ENCODE measurements at regions of chr1 and their contacts with region 1.

Region 1: DNA sequence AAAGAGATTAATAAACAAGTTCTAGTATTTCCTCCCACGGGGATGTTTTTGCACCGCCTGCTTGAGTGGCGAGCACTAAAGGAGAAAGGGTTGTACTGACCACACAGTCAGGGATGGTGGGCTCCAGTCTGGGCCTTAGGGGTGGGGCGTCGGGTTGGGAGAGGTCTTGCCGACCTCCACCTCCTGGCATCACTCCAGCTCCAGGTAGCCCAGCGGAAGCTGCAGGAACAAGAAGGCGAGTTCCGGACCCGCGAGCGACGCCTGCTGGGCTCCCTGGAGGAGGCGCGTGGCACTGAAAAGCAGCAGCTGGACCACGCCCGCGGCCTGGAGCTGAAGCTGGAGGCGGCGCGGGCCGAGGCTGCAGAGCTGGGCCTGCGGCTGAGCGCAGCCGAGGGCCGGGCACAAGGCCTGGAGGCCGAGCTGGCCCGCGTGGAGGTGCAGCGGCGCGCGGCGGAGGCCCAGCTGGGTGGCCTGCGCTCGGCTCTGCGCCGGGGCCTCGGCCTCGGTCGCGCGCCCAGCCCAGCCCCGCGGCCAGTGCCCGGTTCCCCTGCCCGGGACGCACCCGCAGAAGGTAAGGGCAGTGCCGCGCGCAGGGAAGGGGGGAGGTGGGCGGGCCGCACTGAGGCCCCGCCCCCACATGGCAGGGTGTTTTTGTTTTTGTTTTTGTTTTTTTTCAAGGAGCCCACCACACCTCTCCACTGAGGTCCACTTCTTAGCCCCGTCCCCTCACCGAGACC is 19.7 kb downstream of the MFAP2 start:
- DNase-seq: peak; percentile 90 to 91
- H3K4me3 ChIP-seq: peak overlapping the region; percentile 26
- H3K4me3 Mint-ChIP-seq: peak overlapping the region; percentile 59
- H3K27ac Mint-ChIP-seq: no peak overlapping the region
- H3K4me1 ChIP-seq: no peaks in the 10 kb centered on the region
- H3K4me1 Mint-ChIP-seq: no peaks in the 10 kb centered on the region
- H3K27me3 ChIP-seq: no peaks in the 10 kb centered on the region
- H3K27me3 Mint-ChIP-seq: no peaks in the 10 kb centered on the region
- CTCF ChIP-seq: peak; percentile 46 to 75

Region 2: GRCh38 chr1:16913833-16914662 is 46.7 kb before region 1 on chr1:
- CTCF ChIA-PET with region 1: no interaction called
- POLR2A ChIA-PET with region 1: no interaction called
- intact Hi-C with region 1: loop called (anchors 5 kb)
- DNase-seq: peak; percentile 91 to 95
- H3K4me3 ChIP-seq: peak overlapping the region; percentile 82
- H3K4me3 Mint-ChIP-seq: peak overlapping the region; percentile 85
- H3K27ac Mint-ChIP-seq: peak overlapping the region; percentile 71
- H3K4me1 ChIP-seq: peaks cover 4% of the 10 kb centered on the region; the same call in 1 of the 2 replicates
- H3K4me1 Mint-ChIP-seq: peaks cover 16% of the 10 kb centered on the region
- H3K27me3 ChIP-seq: no peaks in the 10 kb centered on the region
- H3K27me3 Mint-ChIP-seq: no peaks in the 10 kb centered on the region
- CTCF ChIP-seq: peak in 1 of 2 experiments; percentile 13

Region 3: GRCh38 chr1:16946646-16947045 is 14.1 kb before region 1 on chr1:
- CTCF ChIA-PET with region 1: interaction called, 26 read pairs
- POLR2A ChIA-PET with region 1: interaction called, 3 read pairs
- intact Hi-C with region 1: loop called (anchors 1 kb)
- DNase-seq: no peak
- H3K4me3 ChIP-seq: no peak overlapping the region
- H3K4me3 Mint-ChIP-seq: no peak overlapping the region
- H3K27ac Mint-ChIP-seq: no peak overlapping the region
- H3K4me1 ChIP-seq: no peaks in the 10 kb centered on the region
- H3K4me1 Mint-ChIP-seq: no peaks in the 10 kb centered on the region
- H3K27me3 ChIP-seq: no peaks in the 10 kb centered on the region
- H3K27me3 Mint-ChIP-seq: no peaks in the 10 kb centered on the region
- CTCF ChIP-seq: no peak

Region 4: GRCh38 chr1:17335821-17336710 is 375.3 kb after region 1 on chr1:
- CTCF ChIA-PET with region 1: no interaction called
- POLR2A ChIA-PET with region 1: no interaction called
- intact Hi-C with region 1: loop called (anchors 10 kb)
- DNase-seq: peak; percentile 56 to 80
- H3K4me3 ChIP-seq: no peak overlapping the region
- H3K4me3 Mint-ChIP-seq: no peak overlapping the region
- H3K27ac Mint-ChIP-seq: no peak overlapping the region
- H3K4me1 ChIP-seq: no peaks in the 10 kb centered on the region
- H3K4me1 Mint-ChIP-seq: peaks cover 7% of the 10 kb centered on the region
- H3K27me3 ChIP-seq: no peaks in the 10 kb centered on the region
- H3K27me3 Mint-ChIP-seq: peaks cover 18% of the 10 kb centered on the region
- CTCF ChIP-seq: peak; percentile 70 to 89

Region 5: DNA sequence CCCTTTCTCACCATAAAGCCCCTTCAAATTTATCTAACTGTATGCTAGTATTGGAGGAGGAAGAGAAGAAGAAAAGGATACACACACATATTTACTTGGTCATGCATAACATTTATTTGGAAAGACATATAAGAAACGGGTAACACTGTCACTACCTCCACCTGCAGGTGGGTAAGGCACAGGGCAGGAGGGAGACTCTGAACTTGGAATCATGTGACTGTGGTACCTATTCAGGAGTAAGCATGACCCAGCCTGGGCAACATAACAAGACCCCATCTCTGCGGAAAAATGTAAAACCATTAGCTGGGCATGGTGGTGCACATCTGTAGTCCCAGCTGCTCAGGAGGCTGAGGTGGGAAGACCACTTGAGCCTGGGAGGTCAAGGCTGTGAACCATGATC is 409.9 kb after region 1 on chr1:
- CTCF ChIA-PET with region 1: no interaction called
- POLR2A ChIA-PET with region 1: no interaction called
- intact Hi-C with region 1: no loop called
- DNase-seq: no peak
- H3K4me3 ChIP-seq: no peak overlapping the region
- H3K4me3 Mint-ChIP-seq: no peak overlapping the region
- H3K27ac Mint-ChIP-seq: no peak overlapping the region
- H3K4me1 ChIP-seq: no peaks in the 10 kb centered on the region
- H3K4me1 Mint-ChIP-seq: no peaks in the 10 kb centered on the region
- H3K27me3 ChIP-seq: no peaks in the 10 kb centered on the region
- H3K27me3 Mint-ChIP-seq: peaks cover 9% of the 10 kb centered on the region
- CTCF ChIP-seq: peak; percentile 27 to 38

Measured in Caco-2 (cell line).